WTC11 (cell line): ENCODE measurements at regions of chr11 and their contacts with region 1.

Region 1: DNA sequence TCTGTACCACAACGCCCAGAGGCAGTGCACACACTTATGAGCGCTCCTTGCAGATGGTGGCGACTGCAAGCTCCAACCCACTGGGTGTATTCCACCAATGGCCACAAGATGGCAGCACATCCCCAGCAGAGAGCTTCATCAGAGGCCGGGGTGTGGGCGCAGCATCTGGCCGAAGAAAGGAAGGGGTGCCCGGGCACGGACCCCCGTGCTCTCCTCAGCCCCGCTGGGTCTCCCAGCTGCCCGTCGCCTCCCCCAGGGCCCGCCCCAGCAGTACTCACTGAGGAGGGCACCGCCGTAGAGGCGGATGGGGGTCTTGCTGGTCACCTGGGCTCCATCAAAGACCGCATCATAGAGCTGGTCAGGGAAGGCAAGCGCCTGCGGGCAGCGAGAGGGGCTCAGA is 14.2 kb downstream of the TP53I11 start:
- DNase-seq: peak; percentile 93
- ATAC-seq: peak; percentile 72
- H3K4me3 Mint-ChIP-seq: no peak overlapping the region
- H3K27ac Mint-ChIP-seq: no peak overlapping the region
- H3K4me1 Mint-ChIP-seq: 0 out of 2 replicates have a peak, but pooled peaks cover 7% of the 10 kb centered on the region
- H3K27me3 Mint-ChIP-seq: no peaks in the 10 kb centered on the region; the same call in 1 of the 2 replicates
- CTCF ChIP-seq: peak; percentile 94

Region 2: GRCh38 chr11:44855493-44855849 is 81.1 kb before region 1 on chr11:
- CTCF ChIA-PET with region 1: no interaction called
- POLR2A ChIA-PET with region 1: no interaction called
- DNase-seq: no peak
- ATAC-seq: no peak
- H3K4me3 Mint-ChIP-seq: no peak overlapping the region
- H3K27ac Mint-ChIP-seq: no peak overlapping the region
- H3K4me1 Mint-ChIP-seq: peaks cover 53% of the 10 kb centered on the region
- H3K27me3 Mint-ChIP-seq: no peaks in the 10 kb centered on the region; the same call in 1 of the 2 replicates
- CTCF ChIP-seq: no peak

Region 3: GRCh38 chr11:44950625-44951476 is 14.3 kb after region 1 on chr11 and contains the start of gene TP53I11:
- CTCF ChIA-PET with region 1: interaction called, 70 read pairs
- POLR2A ChIA-PET with region 1: interaction called, 4 read pairs
- DNase-seq: peak; percentile 43
- ATAC-seq: peak; percentile 19
- H3K4me3 Mint-ChIP-seq: peak within 1 kb of the TSS; percentile 85
- H3K27ac Mint-ChIP-seq: no peak within 1 kb of the TSS
- H3K4me1 Mint-ChIP-seq: peaks cover 58% of the 10 kb centered on the region
- H3K27me3 Mint-ChIP-seq: peaks cover 3% of the 10 kb centered on the region
- CTCF ChIP-seq: peak; percentile 87
- total RNA-seq, gene TP53I11: 42.4 to 44.2 TPM (median 42.9 TPM) in 3 replicates

Region 4: GRCh38 chr11:44977476-44977984 is 41.0 kb after region 1 on chr11:
- CTCF ChIA-PET with region 1: interaction called, 61 read pairs
- POLR2A ChIA-PET with region 1: no interaction called
- DNase-seq: no peak
- ATAC-seq: peak; percentile 74
- H3K4me3 Mint-ChIP-seq: no peak overlapping the region
- H3K27ac Mint-ChIP-seq: peak overlapping the region; percentile 32; the same call in 1 of the 2 replicates
- H3K4me1 Mint-ChIP-seq: peaks cover 18% of the 10 kb centered on the region
- H3K27me3 Mint-ChIP-seq: no peaks in the 10 kb centered on the region
- CTCF ChIP-seq: no peak

Region 5: GRCh38 chr11:45017329-45017728 is 80.8 kb after region 1 on chr11:
- CTCF ChIA-PET with region 1: interaction called, 43 read pairs
- POLR2A ChIA-PET with region 1: no interaction called
- DNase-seq: peak; percentile 52
- ATAC-seq: peak; percentile 91
- H3K4me3 Mint-ChIP-seq: no peak overlapping the region
- H3K27ac Mint-ChIP-seq: no peak overlapping the region
- H3K4me1 Mint-ChIP-seq: peaks cover 21% of the 10 kb centered on the region
- H3K27me3 Mint-ChIP-seq: peaks cover 24% of the 10 kb centered on the region
- CTCF ChIP-seq: peak; percentile 43; the same call in 1 of the 2 replicates

Region 6: DNA sequence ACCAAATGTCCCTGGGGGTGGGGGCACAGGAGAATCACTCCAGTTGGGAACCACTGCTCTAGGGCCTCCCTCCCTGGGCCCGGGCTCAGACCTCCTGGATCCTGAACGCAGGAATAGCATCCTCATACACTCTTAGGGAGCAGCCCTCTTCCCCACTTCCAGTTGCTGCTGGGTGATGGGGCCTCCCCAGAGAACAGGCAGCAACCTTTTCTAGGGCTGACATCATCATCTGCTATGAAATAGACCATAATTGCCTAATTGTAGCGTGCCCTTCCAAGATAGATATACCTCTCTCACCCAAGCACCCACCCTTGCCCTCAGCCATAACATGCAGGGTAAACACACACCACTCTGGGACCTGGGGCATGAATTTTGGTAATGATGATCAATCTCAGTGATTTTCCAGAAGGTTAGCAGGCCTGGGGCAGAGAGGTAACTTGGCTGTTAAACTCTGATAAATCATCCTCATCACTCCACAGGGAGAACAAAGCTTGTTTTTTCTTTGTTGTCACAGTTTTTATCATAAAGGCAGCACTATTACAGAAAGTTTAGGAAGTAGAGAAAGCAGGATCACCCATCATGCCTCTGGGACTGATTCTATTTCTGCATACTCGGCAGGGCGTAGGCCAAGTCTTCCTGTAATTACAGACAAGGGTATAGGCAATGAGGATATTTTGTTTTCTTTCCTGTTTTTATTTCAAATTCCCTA is 121.6 kb after region 1 on chr11:
- CTCF ChIA-PET with region 1: interaction called, 11 read pairs
- POLR2A ChIA-PET with region 1: no interaction called
- DNase-seq: no peak
- ATAC-seq: no peak
- H3K4me3 Mint-ChIP-seq: no peak overlapping the region
- H3K27ac Mint-ChIP-seq: no peak overlapping the region
- H3K4me1 Mint-ChIP-seq: peaks cover 28% of the 10 kb centered on the region
- H3K27me3 Mint-ChIP-seq: no peaks in the 10 kb centered on the region
- CTCF ChIP-seq: no peak

Region 7: DNA sequence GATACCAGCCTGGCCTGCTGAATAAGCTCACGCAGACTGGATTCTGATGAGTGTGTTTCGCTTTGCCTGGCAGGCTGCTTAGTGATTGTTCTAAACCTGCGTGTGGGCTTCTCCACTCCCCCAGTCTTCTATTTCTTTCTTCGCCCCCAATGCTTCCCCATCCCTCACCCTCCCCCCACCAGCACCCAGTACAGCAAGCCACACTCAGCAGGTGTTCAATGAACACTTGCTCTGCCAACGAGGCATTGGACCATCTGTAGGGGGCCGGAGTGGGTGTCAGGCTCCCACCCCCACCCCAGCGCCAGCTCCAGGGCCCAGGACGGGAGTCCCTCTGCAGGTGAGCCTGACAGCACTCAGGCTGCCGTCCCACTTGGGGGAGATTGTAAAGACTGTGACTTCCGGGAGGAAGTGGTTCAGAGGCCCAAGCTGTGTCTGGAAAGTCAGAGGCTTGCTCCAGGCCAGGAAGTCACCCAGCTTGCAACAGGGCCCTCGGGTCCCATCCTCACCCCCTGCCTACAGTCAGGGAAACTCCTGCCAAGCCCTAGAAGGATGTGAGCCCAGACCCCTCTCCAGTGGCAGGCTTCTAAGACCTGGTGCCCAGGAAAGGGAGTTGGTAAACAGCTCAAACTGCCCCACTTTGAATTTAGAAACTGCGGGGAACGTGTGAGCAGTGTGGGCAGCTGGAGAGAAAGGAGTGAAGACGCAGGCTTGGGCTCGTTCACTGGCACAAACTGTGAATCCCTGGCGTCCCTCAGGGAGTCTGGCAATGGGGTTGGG is 143.6 kb after region 1 on chr11:
- CTCF ChIA-PET with region 1: interaction called, 23 read pairs
- POLR2A ChIA-PET with region 1: no interaction called
- DNase-seq: no peak
- ATAC-seq: no peak
- H3K4me3 Mint-ChIP-seq: no peak overlapping the region
- H3K27ac Mint-ChIP-seq: no peak overlapping the region
- H3K4me1 Mint-ChIP-seq: peaks cover 54% of the 10 kb centered on the region
- H3K27me3 Mint-ChIP-seq: no peaks in the 10 kb centered on the region; the same call in 1 of the 2 replicates
- CTCF ChIP-seq: no peak

Region 8: GRCh38 chr11:45097721-45098493 is 161.4 kb after region 1 on chr11:
- CTCF ChIA-PET with region 1: interaction called, 361 read pairs
- POLR2A ChIA-PET with region 1: interaction called, 3 read pairs
- DNase-seq: peak; percentile 88
- ATAC-seq: peak; percentile 46
- H3K4me3 Mint-ChIP-seq: no peak overlapping the region
- H3K27ac Mint-ChIP-seq: no peak overlapping the region
- H3K4me1 Mint-ChIP-seq: peaks cover 26% of the 10 kb centered on the region
- H3K27me3 Mint-ChIP-seq: peaks cover 5% of the 10 kb centered on the region; the same call in 1 of the 2 replicates
- CTCF ChIP-seq: no peak